CD8-positive, alpha-beta T cell (primary cell): ENCODE measurements at regions of chr12 and their contacts with region 1.

Region 1: GRCh38 chr12:47361389-47362021 is 281.7 kb upstream of the AMIGO2 start:
- DNase-seq: peak in 7 of 9 experiments; percentile 19 to 76 (median 48)
- ATAC-seq: peak; percentile 42
- H3K4me3 ChIP-seq: peak overlapping the region; percentile 36 to 40
- H3K4me3 Mint-ChIP-seq: peak overlapping the region; percentile 79
- H3K27ac ChIP-seq: peak overlapping the region; percentile 64 to 94
- H3K27ac Mint-ChIP-seq: peak overlapping the region; percentile 96
- H3K4me1 ChIP-seq: peaks cover 71% of the 10 kb centered on the region
- H3K4me1 Mint-ChIP-seq: peaks cover 59% of the 10 kb centered on the region
- H3K27me3 ChIP-seq: no peaks in the 10 kb centered on the region
- H3K27me3 Mint-ChIP-seq: no peaks in the 10 kb centered on the region
- CTCF ChIP-seq: no peak

Region 2: GRCh38 chr12:46209914-46210872 is 1151.3 kb before region 1 on chr12:
- CTCF ChIA-PET with region 1: no interaction called
- POLR2A ChIA-PET with region 1: no interaction called
- intact Hi-C with region 1: loop called in 1 of 2 experiments (anchors 10 kb)
- DNase-seq: peak in 8 of 9 experiments; percentile 39 to 84 (median 66)
- ATAC-seq: peak; percentile 63
- H3K4me3 ChIP-seq: no peak overlapping the region
- H3K4me3 Mint-ChIP-seq: peak overlapping the region; percentile 69
- H3K27ac ChIP-seq: peak overlapping the region; percentile 38 to 83
- H3K27ac Mint-ChIP-seq: peak overlapping the region; percentile 94
- H3K4me1 ChIP-seq: peaks cover 85% of the 10 kb centered on the region
- H3K4me1 Mint-ChIP-seq: peaks cover 95% of the 10 kb centered on the region
- H3K27me3 ChIP-seq: no peaks in the 10 kb centered on the region
- H3K27me3 Mint-ChIP-seq: no peaks in the 10 kb centered on the region
- CTCF ChIP-seq: no peak

Region 3: DNA sequence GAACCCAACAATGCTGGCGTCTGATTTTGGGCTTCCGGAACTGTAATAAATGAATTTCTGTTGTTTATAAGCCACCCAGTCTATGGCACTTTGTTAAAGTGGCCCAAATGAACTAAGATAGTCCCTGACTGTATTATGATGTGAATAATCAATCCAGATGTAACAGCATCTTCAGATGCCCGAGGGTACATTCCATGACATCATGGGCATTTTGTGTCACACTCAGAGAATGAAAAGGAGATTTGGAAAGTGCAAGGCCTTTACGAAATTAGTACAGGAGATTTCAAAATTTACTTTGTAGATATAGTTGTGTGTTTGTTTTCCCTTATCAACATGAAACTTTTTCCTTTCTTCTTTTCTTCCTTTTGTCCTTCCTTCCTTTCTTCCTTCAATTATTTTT is 227.5 kb before region 1 on chr12:
- CTCF ChIA-PET with region 1: no interaction called
- POLR2A ChIA-PET with region 1: no interaction called
- intact Hi-C with region 1: no loop called
- DNase-seq: no peak
- ATAC-seq: no peak
- H3K4me3 ChIP-seq: no peak overlapping the region
- H3K4me3 Mint-ChIP-seq: no peak overlapping the region
- H3K27ac ChIP-seq: no peak overlapping the region
- H3K27ac Mint-ChIP-seq: peak overlapping the region; percentile 57
- H3K4me1 ChIP-seq: no peaks in the 10 kb centered on the region
- H3K4me1 Mint-ChIP-seq: peaks cover 3% of the 10 kb centered on the region
- H3K27me3 ChIP-seq: no peaks in the 10 kb centered on the region
- H3K27me3 Mint-ChIP-seq: no peaks in the 10 kb centered on the region
- CTCF ChIP-seq: no peak

Region 4: DNA sequence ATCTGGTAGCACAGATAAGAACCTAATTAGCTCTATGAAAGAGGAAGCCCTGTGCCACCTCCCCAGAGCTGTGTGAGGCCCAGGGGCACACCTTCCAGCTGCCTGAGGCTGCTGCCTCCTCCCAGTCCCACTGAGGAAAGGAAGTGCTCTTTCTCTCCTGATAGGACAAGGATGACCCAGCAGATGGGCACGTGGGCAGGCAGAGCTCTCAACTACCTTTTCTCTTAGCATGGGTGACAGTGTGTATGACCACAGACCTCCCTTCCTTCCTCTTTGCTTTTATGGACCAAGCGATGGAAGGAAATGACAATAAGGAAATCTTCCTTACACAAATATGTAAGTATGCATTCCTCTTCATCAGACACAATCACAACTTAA is 154.2 kb before region 1 on chr12:
- CTCF ChIA-PET with region 1: interaction called, 3 read pairs
- POLR2A ChIA-PET with region 1: interaction called, 3 read pairs
- intact Hi-C with region 1: loop called in 1 of 2 experiments (anchors 5 kb)
- DNase-seq: peak in 5 of 9 experiments; percentile 38 to 78 (median 60)
- ATAC-seq: peak; percentile 40
- H3K4me3 ChIP-seq: peak overlapping the region; percentile 19 to 33
- H3K4me3 Mint-ChIP-seq: peak overlapping the region; percentile 71
- H3K27ac ChIP-seq: peak overlapping the region; percentile 8 to 80
- H3K27ac Mint-ChIP-seq: peak overlapping the region; percentile 92
- H3K4me1 ChIP-seq: peaks cover 75% of the 10 kb centered on the region
- H3K4me1 Mint-ChIP-seq: peaks cover 77% of the 10 kb centered on the region
- H3K27me3 ChIP-seq: no peaks in the 10 kb centered on the region
- H3K27me3 Mint-ChIP-seq: no peaks in the 10 kb centered on the region
- CTCF ChIP-seq: no peak

Region 5: DNA sequence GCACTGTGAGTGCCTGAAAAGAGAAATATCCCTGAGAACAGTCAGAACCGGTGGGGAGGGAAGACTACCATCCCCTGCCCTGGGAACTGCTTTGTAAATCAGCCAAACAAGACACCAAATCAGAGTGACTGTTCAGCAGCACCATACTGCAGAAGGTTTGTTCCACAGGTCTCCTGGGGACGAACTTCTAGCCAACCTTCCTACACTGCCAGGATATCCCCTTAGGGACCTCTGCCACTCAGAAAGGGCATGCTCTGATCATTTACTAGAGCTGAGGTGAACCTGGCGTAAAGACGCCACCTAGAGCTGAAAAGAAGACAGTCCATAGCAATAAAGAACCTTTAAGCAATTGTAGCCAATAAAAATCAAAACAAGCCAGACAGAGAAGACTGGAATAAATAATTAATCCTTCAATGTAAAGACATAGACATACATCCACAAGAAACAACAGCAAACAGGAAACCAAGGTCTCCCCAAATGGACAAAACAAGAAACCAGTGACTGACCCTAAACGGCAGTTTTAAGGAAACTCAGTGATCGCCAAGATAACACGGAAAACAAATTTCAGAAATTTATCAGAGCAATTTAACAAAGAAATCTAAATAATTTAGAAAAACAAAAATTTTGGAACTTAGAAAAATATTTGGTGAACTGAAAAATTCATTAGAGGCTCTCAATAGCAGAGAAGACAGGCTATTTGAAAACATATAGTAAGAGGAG is 53.7 kb before region 1 on chr12:
- CTCF ChIA-PET with region 1: no interaction called
- POLR2A ChIA-PET with region 1: no interaction called
- intact Hi-C with region 1: loop called (anchors 2 to 5 kb)
- DNase-seq: peak; percentile 21 to 81 (median 56)
- ATAC-seq: peak; percentile 91
- H3K4me3 ChIP-seq: peak overlapping the region; percentile 37 to 46
- H3K4me3 Mint-ChIP-seq: peak overlapping the region; percentile 81
- H3K27ac ChIP-seq: peak overlapping the region; percentile 21 to 25
- H3K27ac Mint-ChIP-seq: peak overlapping the region; percentile 88
- H3K4me1 ChIP-seq: peaks cover 12% of the 10 kb centered on the region
- H3K4me1 Mint-ChIP-seq: peaks cover 47% of the 10 kb centered on the region
- H3K27me3 ChIP-seq: no peaks in the 10 kb centered on the region
- H3K27me3 Mint-ChIP-seq: no peaks in the 10 kb centered on the region
- CTCF ChIP-seq: peak; percentile 60

Region 6: DNA sequence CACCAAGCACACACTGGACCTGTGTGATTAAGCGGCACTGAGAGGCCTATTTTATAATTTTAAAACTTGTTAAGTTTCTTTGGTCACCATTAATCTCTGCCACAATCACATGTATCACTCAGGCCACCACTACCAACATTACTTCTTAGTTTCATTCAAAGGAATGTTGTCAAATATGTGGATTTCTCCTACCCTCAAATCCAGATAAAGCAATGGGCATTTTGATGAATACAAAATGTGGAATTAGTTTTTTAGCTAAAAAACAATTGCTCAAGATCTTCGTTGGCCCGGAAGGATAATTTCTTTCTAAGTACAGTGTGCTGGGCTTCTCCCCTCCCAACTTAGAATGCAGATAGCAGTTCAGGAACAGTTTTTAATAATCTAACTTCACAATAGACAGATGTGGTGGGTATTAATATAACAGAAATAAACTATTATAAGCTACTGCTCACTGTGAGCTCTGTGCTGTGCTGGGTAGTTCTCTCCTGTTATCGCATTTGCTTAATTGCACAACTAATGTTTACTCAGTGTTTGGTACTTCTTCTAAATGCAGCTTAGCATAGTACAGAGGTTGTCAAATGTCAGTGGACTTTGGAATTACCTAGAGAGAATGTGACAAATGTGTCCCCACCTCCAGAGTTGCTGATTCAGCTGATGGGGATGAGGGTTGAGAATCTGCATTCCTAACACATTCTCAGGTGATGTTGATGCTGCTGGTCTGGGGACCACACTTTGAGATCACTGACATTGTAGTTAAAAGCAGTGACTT is 15.1 kb before region 1 on chr12:
- CTCF ChIA-PET with region 1: no interaction called
- POLR2A ChIA-PET with region 1: interaction called, 9 read pairs
- intact Hi-C with region 1: loop called in 1 of 2 experiments (anchors 2 kb)
- DNase-seq: no peak
- ATAC-seq: no peak
- H3K4me3 ChIP-seq: no peak overlapping the region
- H3K4me3 Mint-ChIP-seq: no peak overlapping the region
- H3K27ac ChIP-seq: no peak overlapping the region
- H3K27ac Mint-ChIP-seq: no peak overlapping the region
- H3K4me1 ChIP-seq: peaks cover 34% of the 10 kb centered on the region
- H3K4me1 Mint-ChIP-seq: peaks cover 45% of the 10 kb centered on the region
- H3K27me3 ChIP-seq: no peaks in the 10 kb centered on the region
- H3K27me3 Mint-ChIP-seq: no peaks in the 10 kb centered on the region
- CTCF ChIP-seq: no peak